Activated naive CD4-positive, alpha-beta T cell treated with anti-CD3 and anti-CD28 coated beads, Interleukin-2, amount 10 ng/mL, durations not matched to agents 7 days and 5 days (primary cell): ENCODE measurements at regions of chr19 and their contacts with region 1.

Region 1: GRCh38 chr19:43595999-43596841 is at the starts of genes IRGQ and ZNF576:
- DNase-seq: peak; percentile 100
- H3K4me3 Mint-ChIP-seq: peak within 1 kb of the TSS; percentile 90
- H3K27ac Mint-ChIP-seq: peak within 1 kb of the TSS; percentile 98
- H3K4me1 Mint-ChIP-seq: peaks cover 43% of the 10 kb centered on the region
- H3K27me3 Mint-ChIP-seq: peaks cover 5% of the 10 kb centered on the region

Region 2: DNA sequence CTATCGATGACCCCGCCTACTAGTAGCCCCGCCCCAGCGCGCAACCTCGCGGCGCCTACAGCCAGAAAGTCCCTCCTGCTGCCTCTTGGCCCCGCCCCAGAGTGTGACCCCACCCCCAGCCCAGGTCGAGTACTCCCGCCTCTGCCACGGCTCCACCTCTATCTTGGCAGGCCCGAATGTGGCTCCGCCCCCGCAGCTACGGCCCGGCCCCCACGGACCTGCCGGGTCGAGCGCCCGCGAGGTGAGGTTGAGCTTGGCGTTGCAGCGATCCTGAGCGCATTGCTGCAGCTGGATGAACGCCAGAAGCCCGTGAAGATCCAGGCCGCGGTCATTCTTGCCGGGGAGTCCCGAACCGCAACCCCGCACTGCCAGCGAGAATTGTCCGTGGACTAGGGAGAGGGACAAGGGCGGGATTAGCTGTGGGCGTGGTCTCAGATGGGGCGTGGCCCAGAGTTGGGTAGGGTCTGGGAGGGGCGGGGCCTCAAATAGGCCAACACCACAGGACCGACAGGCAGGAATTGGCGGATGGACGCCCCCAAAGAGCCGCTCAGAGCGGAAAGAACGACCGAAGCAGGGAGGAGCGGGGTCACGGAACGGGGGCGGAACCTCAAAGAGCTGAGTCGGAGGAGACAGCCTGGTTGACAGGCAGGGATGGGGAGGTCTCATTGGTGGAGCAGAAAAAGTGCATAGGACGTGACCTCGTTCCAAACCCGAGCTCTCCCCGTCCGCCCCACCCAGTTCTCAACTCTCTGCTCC is 132.7 kb before region 1 on chr19:
- CTCF ChIA-PET with region 1: interaction called, 11 read pairs
- DNase-seq: peak; percentile 100
- H3K4me3 Mint-ChIP-seq: peak overlapping the region; percentile 79
- H3K27ac Mint-ChIP-seq: peak overlapping the region; percentile 98
- H3K4me1 Mint-ChIP-seq: peaks cover 42% of the 10 kb centered on the region
- H3K27me3 Mint-ChIP-seq: peaks cover 19% of the 10 kb centered on the region

Region 3: DNA sequence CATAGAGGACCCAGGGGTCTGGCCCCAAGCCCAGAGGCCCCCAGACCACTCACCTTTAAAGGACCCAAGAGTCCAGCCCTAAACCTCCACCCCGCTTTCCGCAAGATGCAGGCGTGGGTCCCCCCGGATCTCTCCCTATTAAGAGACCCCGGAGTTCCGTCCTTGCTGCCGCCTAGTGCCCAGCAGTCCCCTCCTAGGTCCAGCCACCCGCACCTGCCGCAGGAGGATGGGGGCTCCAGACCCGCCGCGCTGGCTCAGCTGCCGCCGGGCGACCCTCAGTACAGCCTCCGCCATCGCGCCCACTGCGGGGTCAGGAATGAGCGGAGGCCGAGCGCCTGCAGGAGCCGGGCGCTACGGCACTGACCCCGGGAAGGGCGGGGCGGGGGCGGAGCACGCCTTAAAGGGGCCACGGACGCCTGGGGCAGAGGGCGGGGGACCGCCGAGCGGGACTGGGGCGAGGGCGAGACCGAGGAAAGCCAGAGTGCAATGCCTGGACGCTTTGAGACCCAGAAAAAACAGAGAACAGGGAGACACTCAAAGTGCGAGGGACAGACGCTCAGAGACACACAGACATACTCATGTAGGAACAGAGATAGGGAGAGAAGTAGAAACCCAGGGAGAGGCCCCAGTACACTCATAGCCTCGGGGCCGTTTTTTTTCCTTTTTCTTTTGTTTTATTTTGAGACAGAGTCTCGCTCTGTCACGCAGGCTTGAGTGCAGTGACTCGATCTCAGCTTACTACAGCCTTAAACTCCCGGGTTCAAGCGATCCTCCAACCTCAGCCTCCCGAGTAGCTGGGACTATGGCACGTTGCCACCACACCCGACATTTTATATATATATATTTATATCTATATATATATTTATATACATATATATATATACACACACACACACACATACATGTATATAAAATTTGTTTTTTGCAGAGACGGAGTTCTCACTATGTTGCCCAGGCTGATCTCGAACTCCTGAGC is 69.0 kb before region 1 on chr19 and contains the start of gene ETHE1:
- CTCF ChIA-PET with region 1: interaction called, 20 read pairs
- DNase-seq: peak; percentile 90
- H3K4me3 Mint-ChIP-seq: peak within 1 kb of the TSS; percentile 96
- H3K27ac Mint-ChIP-seq: peak within 1 kb of the TSS; percentile 89
- H3K4me1 Mint-ChIP-seq: peaks cover 34% of the 10 kb centered on the region
- H3K27me3 Mint-ChIP-seq: no peaks in the 10 kb centered on the region

Region 4: DNA sequence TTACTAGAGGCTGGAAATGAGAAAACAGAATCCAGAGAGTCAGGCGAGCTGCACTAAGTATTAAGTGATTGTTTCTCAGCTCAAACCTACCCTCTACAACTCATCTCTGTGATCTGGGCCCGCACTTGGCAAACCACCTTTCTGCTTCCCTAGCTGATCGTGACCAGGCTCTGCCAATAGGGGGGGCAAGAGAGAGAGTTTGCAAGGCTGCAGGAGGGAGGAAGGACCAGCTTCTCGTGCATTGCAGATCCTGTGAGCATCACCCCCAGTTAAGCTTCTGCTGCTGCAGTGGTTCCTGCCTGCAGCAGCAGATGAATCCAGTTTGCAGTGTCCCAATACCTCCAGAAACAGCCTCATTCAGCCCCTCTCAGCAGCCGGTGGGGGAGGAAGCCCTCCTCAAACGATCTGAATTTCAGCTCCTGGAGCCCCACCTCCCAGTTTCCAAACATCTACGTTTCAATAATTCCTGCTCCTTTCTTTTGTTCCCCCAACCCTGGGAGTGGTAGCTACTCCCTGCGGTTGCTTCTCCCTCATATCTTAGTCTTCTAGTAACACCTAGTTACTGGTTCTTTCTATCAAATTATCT is 40.9 kb before region 1 on chr19:
- CTCF ChIA-PET with region 1: interaction called, 129 read pairs
- DNase-seq: peak; percentile 91
- H3K4me3 Mint-ChIP-seq: no peak overlapping the region
- H3K27ac Mint-ChIP-seq: no peak overlapping the region
- H3K4me1 Mint-ChIP-seq: peaks cover 9% of the 10 kb centered on the region
- H3K27me3 Mint-ChIP-seq: no peaks in the 10 kb centered on the region

Region 5: DNA sequence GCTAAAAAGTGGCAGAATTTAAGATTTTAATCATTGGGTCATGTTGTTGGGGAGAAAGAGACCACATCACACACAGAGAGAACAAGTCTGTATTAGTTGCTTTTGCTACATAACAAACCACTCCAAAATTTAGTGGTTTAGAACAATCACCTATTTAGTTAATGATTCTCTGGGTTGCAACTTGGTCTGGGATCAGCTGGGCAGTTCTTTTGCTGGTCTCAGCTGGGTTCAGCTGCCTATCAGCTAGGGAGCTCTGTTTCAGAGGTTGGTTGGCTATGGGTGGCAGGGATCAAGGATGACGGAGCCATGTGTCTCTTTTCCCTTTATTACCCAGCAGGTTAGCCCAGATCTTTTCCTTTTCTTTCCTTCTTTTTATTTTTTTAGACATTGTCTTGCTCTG is 11.7 kb before region 1 on chr19:
- CTCF ChIA-PET with region 1: interaction called, 40 read pairs
- DNase-seq: no peak
- H3K4me3 Mint-ChIP-seq: no peak overlapping the region
- H3K27ac Mint-ChIP-seq: no peak overlapping the region
- H3K4me1 Mint-ChIP-seq: peaks cover 20% of the 10 kb centered on the region
- H3K27me3 Mint-ChIP-seq: peaks cover 6% of the 10 kb centered on the region